Activated CD4-positive, alpha-beta memory T cell treated with anti-CD3 and anti-CD28 coated beads for 36 hours (primary cell): ENCODE measurements at regions of chr1 and their contacts with region 1.

Region 1: DNA sequence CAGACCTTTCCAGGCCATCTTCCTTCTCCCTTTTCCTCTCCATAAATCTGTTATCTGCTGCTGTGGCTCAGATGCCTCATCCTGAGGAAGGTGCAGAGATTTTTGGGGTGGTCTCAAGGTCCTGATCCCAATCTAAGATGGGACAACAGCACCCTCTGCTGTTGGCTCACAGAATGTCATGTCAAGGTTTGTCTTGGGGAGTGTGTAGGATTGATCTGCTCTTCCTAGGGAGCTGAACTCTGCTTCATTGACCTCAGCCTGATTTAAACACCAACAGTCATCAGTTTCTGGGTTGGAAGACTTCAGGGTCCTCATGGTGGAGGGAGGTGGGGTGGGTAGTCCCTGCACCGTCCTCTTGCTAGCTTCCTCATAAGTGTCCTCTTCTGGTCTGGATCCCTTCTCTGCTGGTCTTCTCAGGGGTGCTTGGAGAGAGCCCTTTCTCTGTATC is 62.8 kb upstream of the LAX1 start:
- DNase-seq: peak; percentile 69
- H3K4me3 Mint-ChIP-seq: no peak overlapping the region
- H3K27ac Mint-ChIP-seq: peak overlapping the region; percentile 75
- H3K4me1 Mint-ChIP-seq: peaks cover 2% of the 10 kb centered on the region
- H3K27me3 Mint-ChIP-seq: no peaks in the 10 kb centered on the region

Region 2: DNA sequence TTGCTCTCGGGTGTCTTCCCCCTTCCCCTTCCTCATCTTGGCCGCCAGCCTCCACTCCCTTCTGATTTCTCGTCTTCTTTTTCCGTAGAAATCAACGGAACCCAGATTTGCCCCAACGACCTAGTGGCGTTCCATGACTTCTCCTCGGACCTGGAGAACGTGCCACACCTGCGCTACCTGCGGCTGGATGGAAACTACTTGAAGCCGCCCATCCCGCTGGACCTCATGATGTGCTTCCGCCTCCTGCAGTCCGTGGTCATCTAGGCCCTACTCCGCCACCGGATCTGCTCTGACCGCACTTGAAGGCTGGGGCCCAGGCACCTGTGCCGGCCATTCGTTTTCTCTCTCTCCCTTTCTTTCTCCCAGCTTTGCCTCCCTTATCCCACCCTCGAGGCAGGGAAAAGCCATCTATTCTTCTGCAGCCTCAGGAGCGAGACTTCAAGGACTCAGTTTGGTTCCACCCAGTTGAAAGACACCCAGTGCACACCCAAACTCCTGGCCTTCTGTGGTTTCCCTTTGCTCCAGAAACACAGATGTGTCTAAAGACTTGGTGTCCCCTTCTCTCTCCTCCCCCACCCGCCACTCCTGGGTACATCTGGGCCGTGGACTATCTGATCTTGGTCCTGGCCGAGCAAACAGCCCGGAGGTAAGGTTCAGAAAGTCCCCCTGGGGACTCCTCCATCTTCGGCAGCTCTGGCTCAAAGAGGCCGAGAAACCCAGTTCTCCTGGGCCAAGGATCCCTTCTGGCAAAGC is 215.4 kb before region 1 on chr1:
- CTCF ChIA-PET with region 1: interaction called, 32 read pairs
- POLR2A ChIA-PET with region 1: no interaction called
- intact Hi-C with region 1: no loop called
- DNase-seq: no peak
- H3K4me3 Mint-ChIP-seq: peak overlapping the region; percentile 67
- H3K27ac Mint-ChIP-seq: no peak overlapping the region
- H3K4me1 Mint-ChIP-seq: peaks cover 9% of the 10 kb centered on the region
- H3K27me3 Mint-ChIP-seq: no peaks in the 10 kb centered on the region

Region 3: DNA sequence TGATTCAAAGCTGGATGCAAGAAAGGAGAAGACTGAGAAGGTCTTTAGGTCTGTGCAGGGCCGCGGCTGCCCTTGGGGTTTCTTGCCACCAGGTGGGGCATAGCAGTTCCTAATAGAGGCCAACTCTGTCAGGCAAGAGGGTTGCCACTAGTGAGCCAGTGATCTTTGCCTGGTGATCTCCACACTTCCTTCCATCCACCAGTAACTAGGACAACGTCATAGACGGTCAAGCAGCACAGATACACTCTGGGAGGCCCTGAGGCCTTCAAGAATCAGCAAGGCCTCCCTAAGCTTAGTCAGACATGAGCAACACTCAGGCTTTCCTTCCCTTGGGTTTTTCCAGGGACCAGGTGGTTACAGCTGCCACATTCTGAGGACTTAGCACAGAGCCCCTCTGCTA is 108.4 kb before region 1 on chr1:
- CTCF ChIA-PET with region 1: interaction called, 61 read pairs
- POLR2A ChIA-PET with region 1: interaction called, 3 read pairs
- intact Hi-C with region 1: loop called (anchors 1 kb)
- DNase-seq: peak; percentile 76
- H3K4me3 Mint-ChIP-seq: no peak overlapping the region
- H3K27ac Mint-ChIP-seq: peak overlapping the region; percentile 4
- H3K4me1 Mint-ChIP-seq: peaks cover 15% of the 10 kb centered on the region
- H3K27me3 Mint-ChIP-seq: no peaks in the 10 kb centered on the region

Region 4: DNA sequence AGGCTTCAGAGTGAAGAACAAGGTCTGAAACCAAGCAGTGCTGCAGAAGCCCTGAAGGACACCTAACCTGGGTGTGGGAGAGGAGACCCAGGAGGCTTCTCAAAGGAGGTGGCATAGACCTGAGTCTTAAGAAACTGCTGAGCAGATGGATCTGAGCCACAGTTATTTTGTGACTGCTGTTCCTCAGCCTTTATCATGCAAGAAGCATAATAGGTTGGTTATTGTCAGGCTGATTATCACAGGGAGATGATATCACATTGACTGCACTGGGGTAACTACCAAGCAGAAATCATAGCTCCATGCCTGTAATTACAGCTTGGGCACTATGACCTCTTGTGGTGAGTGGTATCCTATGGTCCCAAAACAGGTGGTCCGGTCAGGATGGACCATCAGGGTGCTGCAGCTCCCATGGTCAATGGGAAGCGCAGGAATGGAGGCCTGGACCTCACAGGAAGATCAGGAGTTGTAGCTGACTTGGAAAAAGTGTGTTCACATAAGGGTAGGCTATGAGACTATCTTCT is 87.0 kb before region 1 on chr1:
- CTCF ChIA-PET with region 1: interaction called, 15 read pairs
- POLR2A ChIA-PET with region 1: no interaction called
- intact Hi-C with region 1: no loop called
- DNase-seq: no peak
- H3K4me3 Mint-ChIP-seq: no peak overlapping the region
- H3K27ac Mint-ChIP-seq: no peak overlapping the region
- H3K4me1 Mint-ChIP-seq: peaks cover 29% of the 10 kb centered on the region
- H3K27me3 Mint-ChIP-seq: no peaks in the 10 kb centered on the region

Region 5: DNA sequence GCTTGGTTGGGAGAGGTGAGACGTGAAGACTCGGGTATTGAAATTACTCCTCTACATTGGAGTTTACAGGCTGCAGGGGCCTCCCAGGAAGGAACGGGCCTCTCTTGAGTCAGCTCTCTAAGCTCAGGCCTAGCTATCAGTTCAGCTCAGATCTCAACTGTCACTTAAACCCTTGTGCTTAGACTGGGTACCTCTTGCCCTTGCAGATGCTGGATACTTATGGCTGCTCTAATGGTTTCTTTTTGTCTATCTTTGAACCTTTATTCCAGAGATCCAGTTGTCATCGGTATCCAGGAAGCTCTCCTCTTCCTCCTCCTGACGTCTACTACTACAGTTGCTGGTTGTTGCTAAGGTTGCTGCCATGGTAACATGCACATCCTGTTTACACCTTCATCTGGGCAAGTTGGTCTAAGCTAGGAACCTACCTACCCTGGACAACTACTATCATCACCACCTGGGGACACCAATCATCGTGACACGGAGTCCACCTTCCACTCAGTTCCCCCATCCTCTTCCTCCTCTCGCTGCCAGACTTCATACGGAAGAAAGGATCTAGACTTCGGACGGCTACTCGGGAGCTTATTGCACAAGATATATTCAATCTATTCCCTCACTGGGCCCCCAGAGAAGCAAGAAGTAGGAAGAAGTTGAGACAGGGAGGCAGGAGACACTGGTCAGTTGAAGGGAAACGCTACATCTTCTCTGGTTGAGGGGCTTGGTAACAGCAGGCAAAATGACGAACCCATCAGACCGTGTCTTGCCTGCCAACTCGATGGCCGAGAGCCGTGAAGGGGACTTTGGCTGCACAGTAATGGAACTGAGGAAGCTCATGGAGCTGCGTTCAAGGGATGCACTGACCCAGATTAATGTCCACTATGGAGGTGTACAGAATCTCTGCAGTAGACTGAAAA is 19.4 kb before region 1 on chr1:
- CTCF ChIA-PET with region 1: interaction called, 34 read pairs
- POLR2A ChIA-PET with region 1: interaction called, 3 read pairs
- intact Hi-C with region 1: no loop called
- DNase-seq: peak; percentile 78
- H3K4me3 Mint-ChIP-seq: peak overlapping the region; percentile 24
- H3K27ac Mint-ChIP-seq: peak overlapping the region; percentile 89
- H3K4me1 Mint-ChIP-seq: peaks cover 50% of the 10 kb centered on the region
- H3K27me3 Mint-ChIP-seq: no peaks in the 10 kb centered on the region

Region 6: GRCh38 chr1:203744075-203744972 is 42.2 kb after region 1 on chr1:
- CTCF ChIA-PET with region 1: no interaction called
- POLR2A ChIA-PET with region 1: no interaction called
- intact Hi-C with region 1: no loop called
- DNase-seq: peak; percentile 38
- H3K4me3 Mint-ChIP-seq: peak overlapping the region; percentile 17
- H3K27ac Mint-ChIP-seq: peak overlapping the region; percentile 78
- H3K4me1 Mint-ChIP-seq: peaks cover 21% of the 10 kb centered on the region
- H3K27me3 Mint-ChIP-seq: no peaks in the 10 kb centered on the region